Right ventricle myocardium superior (tissue), 1 donor: ENCODE measurements at regions of chr7 and their contacts with region 1.

Region 1: GRCh38 chr7:106736508-106737201 is 75.7 kb upstream of the CCDC71L start:
- DNase-seq: no peak
- ATAC-seq: peak; percentile 85

Region 2: DNA sequence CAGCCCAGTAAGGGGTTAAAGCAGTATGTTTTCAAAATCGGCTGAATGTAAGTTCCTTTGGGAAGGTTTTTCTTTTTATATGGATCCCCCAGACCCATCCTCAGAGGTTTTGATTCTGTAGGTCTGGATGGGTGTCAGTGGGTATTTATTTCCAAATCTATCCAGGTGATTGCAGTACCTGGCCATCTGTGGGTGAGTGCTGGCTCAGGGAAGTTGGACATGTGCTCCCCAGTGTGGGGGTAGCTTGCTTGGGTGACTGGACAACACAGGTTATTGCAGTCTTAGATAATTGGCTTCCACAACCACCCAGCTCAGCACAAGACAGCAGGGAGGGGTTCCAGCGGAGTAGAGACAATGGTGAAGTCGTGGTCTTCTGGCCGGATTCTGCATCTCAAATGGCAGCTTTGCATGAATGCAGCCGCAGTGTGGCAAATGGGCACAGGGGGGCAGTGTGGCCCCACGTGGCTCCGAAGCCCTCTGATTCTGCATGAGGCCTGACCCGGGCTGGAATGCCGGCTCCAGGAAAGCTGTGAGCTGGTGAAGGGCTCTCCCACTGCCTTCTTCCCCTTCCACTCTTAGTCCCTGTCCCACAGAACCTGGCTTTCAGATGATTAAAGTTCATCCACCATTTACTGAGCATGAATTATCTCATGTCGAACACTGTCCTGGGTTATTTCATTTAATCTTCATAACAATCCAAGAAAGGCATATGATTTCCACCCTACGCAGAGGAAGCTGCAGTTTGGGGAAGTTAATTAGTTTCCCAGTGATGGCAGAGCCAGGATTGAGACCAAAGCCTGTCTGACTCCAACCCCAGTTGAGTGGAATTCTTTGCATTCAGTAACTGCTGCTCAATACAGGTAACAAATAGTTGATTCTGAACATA is 560.0 kb before region 1 on chr7:
- intact Hi-C with region 1: loop called (anchors 5 kb)
- DNase-seq: peak; percentile 91
- ATAC-seq: peak; percentile 90

Region 3: GRCh38 chr7:106542550-106543220 is 194.0 kb before region 1 on chr7:
- intact Hi-C with region 1: loop called (anchors 5 kb)
- DNase-seq: no peak
- ATAC-seq: peak; percentile 88

Region 4: DNA sequence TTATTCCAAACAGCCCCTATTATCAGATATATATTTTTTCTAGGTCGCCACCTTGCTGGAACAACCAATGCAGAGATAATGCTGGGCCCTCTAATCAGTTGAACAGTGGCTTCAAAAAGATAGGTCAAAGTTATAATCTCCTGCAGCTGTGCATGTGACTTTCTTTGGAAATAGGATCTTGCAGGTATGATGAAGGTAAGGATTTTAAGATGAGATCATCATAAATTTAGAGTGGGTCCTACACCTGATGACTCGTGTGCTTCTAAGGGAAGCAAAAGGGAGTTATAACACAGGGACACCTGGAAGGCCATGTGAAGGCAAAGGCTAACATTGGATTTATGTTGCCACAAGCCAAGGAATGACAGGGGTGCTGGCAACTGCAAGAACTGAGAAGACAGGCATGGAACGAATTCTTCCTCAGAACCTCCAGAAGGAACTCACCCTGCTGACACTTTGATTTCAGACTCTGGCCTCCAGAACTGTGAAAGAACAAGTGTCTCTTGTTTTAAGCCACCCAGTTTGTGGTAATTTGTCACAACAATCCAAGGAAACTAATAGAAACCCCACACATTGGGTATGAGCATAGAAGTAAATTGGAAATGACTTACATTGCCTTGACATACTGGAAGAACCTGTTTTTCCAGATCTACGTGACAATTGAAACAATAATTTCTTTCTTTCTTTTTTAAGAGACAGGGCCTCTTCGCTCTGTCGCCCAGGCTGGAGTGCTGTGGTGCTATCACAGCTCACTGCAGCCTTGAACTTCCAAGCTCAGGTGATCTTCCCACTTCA is 110.1 kb before region 1 on chr7:
- intact Hi-C with region 1: no loop called
- DNase-seq: no peak
- ATAC-seq: no peak

Region 5: DNA sequence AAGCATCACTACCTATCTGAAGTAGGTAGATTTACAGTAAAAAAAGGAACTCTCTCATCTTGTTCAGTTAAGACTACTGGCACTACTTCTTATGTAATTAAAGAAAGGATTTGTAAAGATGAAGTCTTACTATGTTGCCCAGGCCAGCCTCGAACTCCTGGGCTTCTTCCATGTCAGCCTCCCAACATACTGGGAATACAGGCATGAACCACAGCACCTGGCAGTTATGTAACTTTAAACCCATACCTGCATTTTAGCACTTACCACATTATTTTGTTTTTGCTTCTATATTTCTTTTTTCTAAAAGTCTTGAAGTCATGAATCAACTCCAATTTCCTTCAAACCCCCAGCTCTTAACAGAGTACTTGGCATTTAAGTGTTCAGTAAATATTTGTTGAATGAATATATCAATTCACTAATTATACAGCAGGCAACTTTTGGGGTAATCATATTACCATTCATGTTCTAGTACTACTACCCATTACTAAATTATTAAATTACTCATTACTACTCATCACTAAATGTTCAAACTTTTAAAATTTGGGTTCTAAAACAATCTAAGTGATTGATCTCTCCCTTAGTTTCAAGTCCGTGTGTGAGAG is 44.1 kb before region 1 on chr7:
- intact Hi-C with region 1: no loop called
- DNase-seq: no peak
- ATAC-seq: no peak